ENCODE measurements at regions of chr3 and their contacts with region 1.

Region 1: DNA sequence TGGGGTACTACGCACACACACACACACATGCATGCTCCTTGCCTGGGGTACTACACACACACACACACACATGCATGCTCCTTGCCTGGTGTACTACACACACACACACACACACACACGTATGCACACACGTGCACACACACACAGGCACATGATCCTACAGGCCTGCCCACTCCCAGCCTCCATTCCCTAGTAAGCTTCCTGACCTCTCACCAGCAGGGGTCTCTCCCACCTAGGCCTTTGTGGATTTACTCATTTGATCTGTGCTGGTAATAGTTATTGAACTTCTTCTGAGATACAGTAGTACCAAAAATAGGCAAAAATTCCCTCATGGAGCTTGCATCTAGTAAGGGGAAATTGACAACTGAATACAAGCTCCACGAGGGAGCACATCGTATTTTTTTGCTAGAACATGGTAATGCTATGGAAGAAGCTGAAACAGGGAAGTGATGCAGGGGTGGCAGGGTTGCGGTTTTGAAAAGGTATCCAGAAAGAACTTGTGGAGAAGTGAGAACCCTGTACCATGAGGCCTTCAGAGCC is 19.1 kb downstream of the TTC21A start:
- DNase-seq: peak in 1 of 2 donors; percentile 67
- ATAC-seq: peak; percentile 63 to 87 (median 83)
- H3K4me3 ChIP-seq: no peak overlapping the region
- H3K27ac ChIP-seq: peak overlapping the region in 1 of 10 donors; percentile 15
- H3K4me1 ChIP-seq: peaks cover 0 to 18% (median 5%) of the 10 kb centered on the region in 9 donors
- H3K27me3 ChIP-seq: no peaks in the 10 kb centered on the region
- CTCF ChIP-seq: peak; percentile 42 to 78 (median 68)

Region 2: GRCh38 chr3:39180546-39181346 is 54.1 kb after region 1 on chr3:
- intact Hi-C with region 1: loop called in 6 of 10 experiments (anchors 5 to 10 kb)
- DNase-seq: peak; percentile 91 to 93
- ATAC-seq: peak; percentile 75 to 89 (median 82)
- H3K4me3 ChIP-seq: peak overlapping the region in 9 of 10 donors; percentile 2 to 50 (median 40)
- H3K27ac ChIP-seq: peak overlapping the region; percentile 78 to 97 (median 92)
- H3K4me1 ChIP-seq: peaks cover 17 to 81% (median 59%) of the 10 kb centered on the region in 9 donors
- H3K27me3 ChIP-seq: no peaks in the 10 kb centered on the region
- CTCF ChIP-seq: peak in 6 of 9 donors; percentile 24 to 51 (median 46)

Region 3: GRCh38 chr3:39189959-39190269 is 63.3 kb after region 1 on chr3:
- intact Hi-C with region 1: loop called in 9 of 10 experiments (anchors 2 to 10 kb)
- DNase-seq: peak; percentile 52 to 78
- ATAC-seq: peak; percentile 3 to 52 (median 32)
- H3K4me3 ChIP-seq: peak overlapping the region in 9 of 10 donors; percentile 1 to 68 (median 57)
- H3K27ac ChIP-seq: peak overlapping the region; percentile 70 to 98 (median 90)
- H3K4me1 ChIP-seq: peaks cover 10 to 59% (median 29%) of the 10 kb centered on the region in 9 donors
- H3K27me3 ChIP-seq: no peaks in the 10 kb centered on the region
- CTCF ChIP-seq: peak; percentile 8 to 87 (median 76)

Region 4: GRCh38 chr3:39208463-39209055 is 82.0 kb after region 1 on chr3:
- intact Hi-C with region 1: loop called in 2 of 10 experiments (anchors 5 kb)
- DNase-seq: peak; percentile 44 to 77
- ATAC-seq: peak in 7 of 8 donors; percentile 73 to 93 (median 90)
- H3K4me3 ChIP-seq: no peak overlapping the region
- H3K27ac ChIP-seq: peak overlapping the region in 7 of 10 donors; percentile 1 to 50 (median 34)
- H3K4me1 ChIP-seq: peaks cover 0 to 20% (median 9%) of the 10 kb centered on the region in 9 donors
- H3K27me3 ChIP-seq: no peaks in the 10 kb centered on the region
- CTCF ChIP-seq: peak; percentile 38 to 83 (median 67)

Region 5: DNA sequence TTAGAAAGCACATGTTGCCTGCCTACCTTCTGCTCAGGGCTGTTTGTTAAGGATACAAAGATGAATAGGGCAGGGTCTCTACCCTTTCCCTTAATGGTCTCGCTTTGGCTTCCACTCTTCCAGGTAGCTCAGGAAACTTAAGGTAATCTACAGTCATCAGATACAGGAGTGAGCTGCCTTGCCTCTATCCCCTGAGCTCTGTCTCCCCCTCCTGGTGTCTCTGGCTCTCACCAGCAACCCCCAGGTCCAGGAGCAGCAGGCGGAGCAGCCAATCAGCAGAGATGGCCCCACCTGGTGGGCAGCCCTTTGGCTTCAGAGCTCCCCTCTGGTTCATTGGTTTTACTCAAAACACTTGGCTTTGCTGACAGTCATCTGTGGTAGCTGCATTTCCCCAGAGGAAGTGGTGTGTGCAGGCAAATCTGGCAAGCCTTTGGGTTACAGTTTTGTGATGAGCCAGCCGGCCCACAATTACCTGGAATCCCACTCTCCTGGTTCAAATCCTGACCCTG is 161.8 kb after region 1 on chr3:
- intact Hi-C with region 1: loop called (anchors 1 to 5 kb)
- DNase-seq: peak; percentile 63 to 83
- ATAC-seq: peak; percentile 80 to 95 (median 92)
- H3K4me3 ChIP-seq: no peak overlapping the region
- H3K27ac ChIP-seq: no peak overlapping the region
- H3K4me1 ChIP-seq: peaks cover 0 to 13% (median 0%) of the 10 kb centered on the region in 9 donors
- H3K27me3 ChIP-seq: no peaks in the 10 kb centered on the region
- CTCF ChIP-seq: peak; percentile 76 to 96 (median 93)

Region 6: GRCh38 chr3:39383045-39383880 is 256.7 kb after region 1 on chr3 and contains the start of gene SLC25A38:
- intact Hi-C with region 1: loop called in 1 of 10 experiments (anchors 10 kb)
- DNase-seq: peak; percentile 67 to 78
- ATAC-seq: peak; percentile 74 to 85 (median 80)
- H3K4me3 ChIP-seq: peak within 1 kb of the TSS; percentile 61 to 93 (median 80)
- H3K27ac ChIP-seq: peak within 1 kb of the TSS; percentile 36 to 96 (median 89)
- H3K4me1 ChIP-seq: peaks cover 10 to 40% (median 23%) of the 10 kb centered on the region in 9 donors
- H3K27me3 ChIP-seq: no peaks in the 10 kb centered on the region
- CTCF ChIP-seq: peak in 5 of 9 donors; percentile 21 to 51 (median 35)
- total RNA-seq, gene SLC25A38: 9.7 to 25.8 (median 19.2) TPM